Activated T-helper 1 cell treated with anti-CD3 and anti-CD28 coated beads, Interleukin-12 subunit alpha, Interleukin-12 subunit beta, Interleukin-2, Interleukin-4 antibody, amounts not matched to agents 30 ng/mL and 10 ng/mL and 1 ng/mL, durations not matched to agents 14 hours and 24 hours and 36 hours (primary cell): ENCODE measurements at regions of chr1 and their contacts with region 1.

Region 1: DNA sequence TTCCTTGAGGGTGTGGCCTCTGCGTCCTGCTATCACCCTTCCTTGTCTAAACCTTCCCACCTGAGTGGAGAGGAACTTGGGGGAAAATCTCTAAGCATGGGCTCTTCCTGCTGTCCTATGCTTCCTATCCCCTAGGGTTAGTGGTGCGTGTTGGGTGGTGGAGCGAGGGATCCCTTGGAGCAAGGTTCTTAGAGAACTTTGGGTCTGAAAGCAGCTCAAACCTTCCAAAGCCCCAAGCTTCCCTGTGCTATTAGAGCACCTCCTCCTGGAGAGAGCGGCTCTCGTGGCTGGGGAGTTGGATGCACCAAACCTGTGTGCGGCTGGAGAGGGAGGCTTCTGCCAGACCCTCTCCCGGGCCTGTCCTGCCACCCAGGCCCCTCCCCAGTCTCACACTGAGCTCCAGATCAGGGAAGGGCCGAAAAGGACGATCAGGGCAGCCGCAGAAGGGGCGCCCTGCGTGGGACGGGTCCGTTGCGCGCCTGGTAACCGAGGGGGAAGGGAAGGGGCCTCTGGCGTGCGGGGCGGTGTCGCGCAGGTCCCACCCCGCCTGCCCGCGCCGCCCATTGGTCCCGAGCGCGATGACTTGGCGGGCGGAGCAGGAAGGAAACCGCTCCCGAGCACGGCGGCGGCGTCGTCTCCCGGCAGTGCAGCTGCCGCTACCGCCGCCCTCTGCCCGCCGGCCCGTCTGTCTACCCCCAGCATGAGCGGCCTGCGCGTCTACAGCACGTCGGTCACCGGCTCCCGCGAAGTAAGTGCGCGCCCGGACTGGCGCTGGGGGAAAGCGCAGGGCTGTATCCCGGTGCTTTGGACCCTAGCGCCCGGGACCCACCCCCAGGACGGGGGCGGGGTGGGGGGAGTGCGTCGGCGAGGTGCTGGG is at the start of gene SH3BGRL3:
- DNase-seq: peak; percentile 85
- H3K4me3 Mint-ChIP-seq: peak within 1 kb of the TSS; percentile 92
- H3K27ac Mint-ChIP-seq: peak within 1 kb of the TSS; percentile 99
- H3K4me1 Mint-ChIP-seq: peaks cover 78% of the 10 kb centered on the region
- H3K27me3 Mint-ChIP-seq: no peaks in the 10 kb centered on the region
- total RNA-seq, gene SH3BGRL3: 551 and 575 TPM in 2 replicates

Region 2: DNA sequence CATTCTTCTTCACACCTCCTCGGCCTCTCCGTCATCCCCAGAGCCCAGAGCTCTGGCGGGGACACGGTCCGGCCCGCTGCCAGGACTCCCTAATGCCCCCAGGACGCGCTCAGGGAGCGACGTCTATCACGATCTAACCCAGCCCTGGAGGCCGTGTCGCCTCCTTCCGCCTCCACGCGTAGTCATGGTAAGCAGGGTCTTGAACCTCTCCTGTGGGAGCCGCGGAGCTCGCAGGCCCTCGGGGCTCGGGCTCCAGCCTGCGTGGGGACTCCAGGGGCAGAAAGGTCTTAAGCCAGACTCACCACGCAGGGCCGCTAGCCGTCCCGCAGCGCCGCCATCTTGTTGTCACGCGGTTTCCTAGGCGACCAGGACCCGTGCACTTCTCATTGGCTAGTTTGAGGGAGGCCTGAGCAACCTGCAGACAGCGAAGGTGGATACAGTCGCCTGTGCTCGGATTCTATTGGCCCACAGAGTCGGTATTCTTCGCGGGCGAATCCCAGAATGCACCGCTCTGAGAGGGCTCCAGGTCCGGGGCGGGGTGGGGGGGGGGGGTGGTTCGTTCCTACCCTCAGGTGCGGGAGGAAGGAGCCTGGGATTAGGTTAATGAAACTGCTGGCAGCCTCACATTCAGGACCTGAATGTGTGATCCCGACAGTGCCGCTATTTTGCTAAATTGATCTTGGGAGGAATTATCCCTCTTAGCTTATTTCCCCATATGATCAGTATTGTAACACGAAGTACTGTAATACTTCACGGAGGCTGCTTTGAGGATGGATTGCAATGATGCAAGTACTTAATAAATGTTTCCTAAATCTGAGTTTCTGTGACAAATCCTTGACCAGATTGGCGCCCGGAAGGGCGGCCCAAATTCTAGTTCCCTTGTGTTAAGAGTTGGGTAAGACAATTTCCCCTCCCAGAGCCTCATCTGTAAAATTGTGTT is 26.9 kb after region 1 on chr1 and contains the start of gene UBXN11:
- intact Hi-C with region 1: loop called (anchors 1 kb)
- DNase-seq: peak; percentile 92
- H3K4me3 Mint-ChIP-seq: peak within 1 kb of the TSS; percentile 99
- H3K27ac Mint-ChIP-seq: peak within 1 kb of the TSS; percentile 95
- H3K4me1 Mint-ChIP-seq: peaks cover 41% of the 10 kb centered on the region
- H3K27me3 Mint-ChIP-seq: no peaks in the 10 kb centered on the region
- total RNA-seq, gene UBXN11: 14.8 and 22.1 TPM in 2 replicates

Region 3: GRCh38 chr1:26363549-26364448 is 84.1 kb after region 1 on chr1:
- intact Hi-C with region 1: loop called (anchors 2 kb)
- DNase-seq: peak; percentile 74
- H3K4me3 Mint-ChIP-seq: no peak overlapping the region
- H3K27ac Mint-ChIP-seq: no peak overlapping the region
- H3K4me1 Mint-ChIP-seq: peaks cover 46% of the 10 kb centered on the region
- H3K27me3 Mint-ChIP-seq: peaks cover 39% of the 10 kb centered on the region

Region 4: GRCh38 chr1:26391450-26391849 is 111.8 kb after region 1 on chr1:
- intact Hi-C with region 1: loop called (anchors 1 kb)
- DNase-seq: peak; percentile 36
- H3K4me3 Mint-ChIP-seq: no peak overlapping the region
- H3K27ac Mint-ChIP-seq: no peak overlapping the region
- H3K4me1 Mint-ChIP-seq: peaks cover 42% of the 10 kb centered on the region
- H3K27me3 Mint-ChIP-seq: peaks cover 3% of the 10 kb centered on the region

Region 5: GRCh38 chr1:26431979-26432695 is 152.4 kb after region 1 on chr1 and contains the start of gene DHDDS:
- intact Hi-C with region 1: loop called (anchors 2 kb)
- DNase-seq: peak; percentile 98
- H3K4me3 Mint-ChIP-seq: peak within 1 kb of the TSS; percentile 94
- H3K27ac Mint-ChIP-seq: peak within 1 kb of the TSS; percentile 89
- H3K4me1 Mint-ChIP-seq: peaks cover 18% of the 10 kb centered on the region
- H3K27me3 Mint-ChIP-seq: peaks cover 12% of the 10 kb centered on the region
- total RNA-seq, gene DHDDS: 58.4 and 60.9 TPM in 2 replicates